AG04449 (cell line): ENCODE measurements at regions of chr20 and their contacts with region 1.

Region 1: DNA sequence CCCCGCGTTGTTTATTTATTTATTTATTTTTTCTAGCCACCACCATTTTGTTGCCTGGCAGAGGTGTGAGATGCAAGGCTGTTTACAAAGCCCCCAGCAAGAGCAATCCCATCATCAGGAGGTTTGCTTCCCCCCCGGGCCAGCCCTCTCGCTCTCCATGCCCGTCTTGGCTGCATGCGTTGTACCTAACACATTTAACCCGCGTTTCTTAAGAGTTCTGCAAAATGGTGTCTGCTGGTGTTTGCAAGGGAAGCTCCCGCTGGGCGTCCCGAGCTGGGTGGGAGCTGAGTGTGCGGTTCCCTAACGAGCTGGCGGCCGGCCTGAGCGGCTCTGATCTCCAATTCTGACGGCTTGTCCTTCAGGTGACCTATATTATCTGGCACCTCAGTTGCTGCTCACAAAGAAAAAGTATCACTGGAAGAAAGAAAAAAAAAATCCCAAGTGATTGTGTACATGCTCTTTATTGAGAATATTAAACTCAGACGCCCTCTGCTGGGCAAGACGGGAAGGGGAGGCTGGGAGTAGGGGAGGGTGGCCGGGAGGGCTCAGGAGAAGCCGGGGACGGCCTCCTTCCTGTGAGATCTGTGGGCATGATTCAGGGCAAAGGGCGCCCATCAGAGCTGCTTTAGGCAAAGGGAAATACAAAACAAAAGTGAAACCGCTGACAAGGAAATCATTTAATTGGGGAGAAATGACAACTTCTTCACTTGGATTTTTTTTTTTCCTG is 154.8 kb downstream of the BCAS1 start:
- DNase-seq: no peak
- H3K4me3 ChIP-seq: peak overlapping the region; percentile 55
- CTCF ChIP-seq: peak; percentile 82

Region 2: GRCh38 chr20:53586640-53587039 is 329.0 kb before region 1 on chr20:
- CTCF ChIA-PET with region 1: interaction called, 17 read pairs
- POLR2A ChIA-PET with region 1: no interaction called
- DNase-seq: no peak
- H3K4me3 ChIP-seq: no peak overlapping the region
- CTCF ChIP-seq: no peak

Region 3: DNA sequence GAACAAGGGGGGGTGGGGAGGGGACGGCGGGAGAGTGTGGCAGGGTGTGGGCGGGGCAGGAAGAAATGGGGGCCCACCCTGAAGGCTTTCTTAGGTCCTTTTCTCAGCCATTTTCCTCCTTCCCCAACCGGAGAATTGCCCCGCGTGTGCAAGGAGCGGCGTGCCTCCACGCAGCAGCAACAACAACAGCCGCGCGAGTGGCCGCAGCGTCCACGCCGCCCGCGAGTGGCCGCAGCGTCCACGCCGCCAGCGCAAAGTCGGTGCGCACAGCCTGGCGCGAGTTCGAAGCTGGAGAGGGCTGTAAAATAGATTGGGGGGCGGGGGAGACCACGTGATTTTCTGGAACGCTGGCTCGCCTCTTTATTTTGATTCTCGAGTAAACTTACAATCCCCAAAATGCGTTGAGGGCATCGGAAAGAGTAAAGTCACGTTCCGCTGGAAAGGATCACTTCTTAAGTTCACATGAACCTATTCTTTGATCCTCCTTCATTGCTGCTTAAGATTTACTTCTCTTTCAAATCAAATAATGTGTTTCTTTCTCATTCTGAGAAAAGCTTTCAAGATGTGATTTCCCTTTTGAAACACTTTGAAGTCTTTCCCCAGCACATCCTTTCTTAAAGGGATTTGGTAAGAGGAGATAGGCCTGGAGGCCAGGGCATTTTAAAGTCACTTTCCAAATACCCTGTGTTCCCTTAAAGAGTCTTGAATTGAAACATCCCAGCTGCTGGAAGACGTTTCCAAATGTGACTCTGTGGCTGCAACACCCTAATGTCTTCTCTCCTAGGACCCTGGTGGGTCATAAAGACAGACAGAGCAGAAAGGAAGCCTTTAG is 255.3 kb before region 1 on chr20:
- CTCF ChIA-PET with region 1: interaction called, 13 read pairs
- POLR2A ChIA-PET with region 1: no interaction called
- DNase-seq: no peak
- H3K4me3 ChIP-seq: peak overlapping the region; percentile 6; the same call in 1 of the 2 replicates
- CTCF ChIP-seq: no peak

Region 4: DNA sequence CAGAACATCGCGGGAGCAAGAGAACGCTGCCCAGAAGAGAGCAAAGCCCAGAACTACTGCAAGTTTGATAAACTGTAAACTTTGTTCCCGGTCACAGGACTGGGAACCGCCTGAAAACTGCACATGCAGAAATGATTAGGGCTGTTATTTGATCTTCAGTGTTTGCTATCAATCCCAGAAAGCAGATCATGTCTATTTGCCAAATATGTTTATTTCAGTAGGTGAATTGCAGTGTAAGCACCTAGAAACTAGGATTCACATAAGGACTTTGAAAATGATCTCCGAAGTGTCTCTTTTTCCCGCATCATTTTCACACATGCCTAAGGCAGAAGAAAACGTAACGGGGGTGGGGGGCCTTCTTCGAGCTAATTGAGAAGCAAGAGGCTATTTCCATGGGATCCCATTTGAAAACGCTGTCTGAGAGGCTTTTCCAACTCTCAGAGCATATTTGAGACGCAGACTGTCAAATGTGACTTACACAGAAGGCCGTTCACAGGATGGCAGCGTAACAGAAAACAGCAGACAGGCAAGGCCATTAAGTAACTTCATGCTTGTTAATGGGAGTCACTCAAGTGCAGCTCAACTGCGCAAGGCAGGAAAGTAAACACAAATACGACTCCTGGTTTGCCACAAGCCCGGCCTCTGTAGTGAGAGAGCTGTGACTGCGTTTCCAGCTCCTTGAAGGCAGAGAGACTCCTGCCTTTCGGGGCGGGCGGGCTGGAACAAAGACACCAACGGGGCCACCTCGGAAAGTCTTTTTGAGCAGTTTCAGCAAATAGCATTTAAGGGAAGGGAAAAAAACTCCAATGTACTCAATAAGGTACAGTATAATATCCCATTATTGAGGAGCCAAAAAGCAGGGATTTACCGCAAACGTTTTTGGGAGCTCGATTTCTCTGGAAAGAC is 177.3 kb before region 1 on chr20:
- CTCF ChIA-PET with region 1: interaction called, 25 read pairs
- POLR2A ChIA-PET with region 1: interaction called, 6 read pairs
- DNase-seq: peak; percentile 94
- H3K4me3 ChIP-seq: peak overlapping the region; percentile 35
- CTCF ChIP-seq: no peak

Region 5: DNA sequence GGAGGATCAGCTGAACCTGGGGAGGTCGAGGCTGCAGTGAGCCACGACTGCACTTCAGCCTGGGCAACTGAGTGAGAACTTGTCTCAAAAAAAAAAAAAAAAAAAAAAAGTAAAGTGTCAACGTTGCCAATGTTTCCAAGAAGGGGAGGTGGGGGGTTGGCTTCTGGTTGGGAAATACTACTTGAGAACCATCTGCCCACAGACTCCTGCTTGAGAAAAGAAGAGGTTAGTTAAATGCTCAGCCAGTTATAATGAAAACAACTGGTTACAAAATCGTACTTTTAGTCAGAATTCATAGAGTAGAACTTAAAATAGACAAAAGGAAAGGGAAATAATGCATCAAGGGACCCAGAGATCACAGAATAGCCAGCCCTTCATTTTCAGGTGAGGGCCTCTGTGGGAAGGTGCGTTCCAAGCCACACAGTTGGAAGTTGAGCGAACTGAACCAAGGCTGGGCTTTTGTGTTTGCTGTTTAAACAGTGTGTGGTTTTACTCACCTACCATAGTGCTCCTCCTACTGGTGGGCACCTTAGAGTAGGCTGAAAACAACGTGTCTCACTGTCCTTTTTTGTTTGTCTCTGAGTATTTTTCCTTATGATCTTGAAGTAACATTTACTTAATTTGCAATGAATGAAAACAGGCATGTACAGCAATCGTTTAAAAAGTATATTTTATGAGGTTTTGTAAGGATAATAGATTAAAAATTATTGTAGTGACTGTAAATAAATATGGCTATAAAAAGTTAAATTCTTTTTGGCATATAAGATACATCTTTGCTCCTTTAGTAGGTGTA is 45.9 kb before region 1 on chr20:
- CTCF ChIA-PET with region 1: interaction called, 14 read pairs
- POLR2A ChIA-PET with region 1: no interaction called
- DNase-seq: no peak
- H3K4me3 ChIP-seq: no peak overlapping the region
- CTCF ChIP-seq: peak; percentile 72

Region 6: DNA sequence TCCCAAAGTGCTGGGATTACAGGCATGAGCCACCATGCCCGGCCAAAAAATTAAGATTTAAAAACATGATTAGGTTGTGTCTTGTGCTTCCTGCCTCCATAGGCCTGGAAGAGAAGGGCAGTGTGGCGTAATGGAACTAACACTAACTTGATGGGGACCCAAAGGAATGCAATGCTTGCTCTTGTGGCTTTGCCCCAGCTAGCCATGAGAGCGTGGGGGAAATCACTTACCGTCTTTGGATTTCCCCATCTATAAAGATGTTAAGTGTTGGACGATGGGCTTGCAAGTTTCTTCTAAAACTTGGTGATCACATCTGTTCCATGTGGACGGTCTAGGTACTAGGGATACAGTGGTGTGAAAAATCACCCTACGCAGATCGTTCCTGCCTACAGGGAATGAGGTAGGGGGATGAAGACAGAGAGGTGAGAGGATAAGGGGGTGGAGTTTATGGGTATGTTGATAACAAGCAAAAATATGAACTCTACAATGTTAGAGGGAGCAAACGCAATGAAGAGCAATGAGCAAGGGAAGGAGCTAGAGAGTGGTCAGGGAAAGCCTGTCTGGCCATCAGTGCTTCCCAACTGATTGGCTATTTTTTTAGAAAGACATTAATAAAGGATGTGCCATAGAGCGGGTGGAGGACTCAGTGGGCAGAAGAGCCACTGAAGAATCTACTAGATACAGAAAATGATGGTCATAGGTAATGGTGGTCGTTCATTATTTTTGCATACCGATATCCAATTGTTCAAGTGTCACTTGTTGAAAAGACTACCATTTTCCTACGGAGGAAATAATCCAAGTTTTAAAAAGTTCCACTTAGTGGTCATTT is 10.4 kb before region 1 on chr20:
- CTCF ChIA-PET with region 1: interaction called, 62 read pairs
- POLR2A ChIA-PET with region 1: interaction called, 6 read pairs
- DNase-seq: no peak
- H3K4me3 ChIP-seq: no peak overlapping the region
- CTCF ChIP-seq: no peak

Region 7: GRCh38 chr20:54014293-54014926 is 98.8 kb after region 1 on chr20:
- CTCF ChIA-PET with region 1: no interaction called
- POLR2A ChIA-PET with region 1: no interaction called
- DNase-seq: no peak
- H3K4me3 ChIP-seq: no peak overlapping the region
- CTCF ChIP-seq: no peak